CD4-positive, alpha-beta memory T cell (primary cell): ENCODE measurements at regions of chr7 and their contacts with region 1.

Region 1: DNA sequence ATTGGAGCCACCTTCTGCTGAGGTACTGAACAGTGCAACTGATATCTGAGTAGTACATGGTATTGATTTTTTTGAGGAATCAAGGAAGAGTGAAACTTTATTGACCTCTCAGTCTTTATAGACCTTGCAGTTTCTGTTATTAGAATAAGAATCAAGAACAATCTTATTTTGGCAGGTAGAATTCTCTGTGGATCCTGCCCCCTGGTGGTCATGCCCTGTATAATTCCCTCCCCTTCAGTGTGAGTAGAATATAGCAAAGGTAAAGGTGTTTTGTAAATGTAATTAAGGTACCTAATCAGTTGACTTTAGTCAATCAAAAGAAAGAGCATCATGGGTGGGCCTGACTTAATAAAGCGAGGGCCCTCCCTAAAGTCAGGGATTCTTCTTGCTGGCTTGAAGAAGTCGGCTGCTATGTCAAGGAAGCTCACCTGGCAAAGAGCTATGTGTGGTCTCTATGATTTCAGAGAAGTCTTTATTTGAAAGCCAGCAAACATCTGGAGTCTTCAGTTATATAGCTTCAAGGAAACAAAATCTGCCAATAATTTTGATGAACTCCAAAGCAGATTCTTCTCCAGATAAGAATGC is 142.8 kb downstream of the LSM5 start:
- DNase-seq: no peak
- H3K4me3 ChIP-seq: no peak overlapping the region
- H3K4me3 Mint-ChIP-seq: no peak overlapping the region
- H3K27ac ChIP-seq: no peak overlapping the region
- H3K27ac Mint-ChIP-seq: no peak overlapping the region
- H3K4me1 ChIP-seq: no peaks in the 10 kb centered on the region
- H3K4me1 Mint-ChIP-seq: no peaks in the 10 kb centered on the region
- H3K27me3 ChIP-seq: no peaks in the 10 kb centered on the region
- H3K27me3 Mint-ChIP-seq: no peaks in the 10 kb centered on the region

Region 2: DNA sequence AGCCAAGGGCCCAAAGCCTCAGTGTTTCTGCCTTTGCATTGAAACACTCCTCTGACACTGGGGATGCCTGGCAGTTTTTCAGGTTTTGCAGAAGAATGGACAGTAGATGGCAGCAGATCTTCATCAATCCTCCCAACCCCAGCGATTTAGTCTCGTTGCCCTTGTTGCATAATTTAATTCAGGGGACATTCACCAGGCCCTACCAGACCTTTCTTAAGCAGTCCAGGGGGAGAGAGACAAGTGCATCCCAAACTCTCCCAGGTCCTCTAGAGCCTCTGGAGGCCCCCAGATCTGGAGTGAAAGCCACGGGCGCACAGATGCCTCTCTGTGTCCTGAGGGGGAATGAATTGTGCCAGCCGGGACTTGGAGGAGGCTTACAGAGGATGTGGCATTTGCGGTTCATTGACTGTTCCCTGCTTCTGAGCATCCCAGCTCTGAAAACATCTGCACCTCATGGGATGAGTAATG is 1546.5 kb before region 1 on chr7:
- CTCF ChIA-PET with region 1: no interaction called
- POLR2A ChIA-PET with region 1: no interaction called
- intact Hi-C with region 1: loop called (anchors 5 kb)
- DNase-seq: peak in 4 of 5 donors; percentile 20 to 32 (median 29)
- H3K4me3 ChIP-seq: no peak overlapping the region
- H3K4me3 Mint-ChIP-seq: peak overlapping the region in 1 of 8 donors; percentile 13
- H3K27ac ChIP-seq: no peak overlapping the region
- H3K27ac Mint-ChIP-seq: no peak overlapping the region
- H3K4me1 ChIP-seq: peaks cover 5% of the 10 kb centered on the region
- H3K4me1 Mint-ChIP-seq: peaks cover 0 to 5% (median 1%) of the 10 kb centered on the region in 4 donors
- H3K27me3 ChIP-seq: no peaks in the 10 kb centered on the region
- H3K27me3 Mint-ChIP-seq: no peaks in the 10 kb centered on the region

Region 3: GRCh38 chr7:31899356-31899927 is 447.9 kb before region 1 on chr7:
- CTCF ChIA-PET with region 1: no interaction called
- POLR2A ChIA-PET with region 1: no interaction called
- intact Hi-C with region 1: no loop called
- DNase-seq: no peak
- H3K4me3 ChIP-seq: no peak overlapping the region
- H3K4me3 Mint-ChIP-seq: no peak overlapping the region
- H3K27ac ChIP-seq: no peak overlapping the region
- H3K27ac Mint-ChIP-seq: no peak overlapping the region
- H3K4me1 ChIP-seq: no peaks in the 10 kb centered on the region
- H3K4me1 Mint-ChIP-seq: no peaks in the 10 kb centered on the region
- H3K27me3 ChIP-seq: no peaks in the 10 kb centered on the region
- H3K27me3 Mint-ChIP-seq: no peaks in the 10 kb centered on the region

Region 4: GRCh38 chr7:32357535-32358277 is 10.4 kb after region 1 on chr7:
- CTCF ChIA-PET with region 1: interaction called, 12 read pairs
- POLR2A ChIA-PET with region 1: no interaction called
- intact Hi-C with region 1: no loop called
- DNase-seq: no peak
- H3K4me3 ChIP-seq: no peak overlapping the region
- H3K4me3 Mint-ChIP-seq: no peak overlapping the region
- H3K27ac ChIP-seq: no peak overlapping the region
- H3K27ac Mint-ChIP-seq: no peak overlapping the region
- H3K4me1 ChIP-seq: no peaks in the 10 kb centered on the region
- H3K4me1 Mint-ChIP-seq: no peaks in the 10 kb centered on the region
- H3K27me3 ChIP-seq: no peaks in the 10 kb centered on the region
- H3K27me3 Mint-ChIP-seq: peaks cover 0 to 7% of the 10 kb centered on the region in 2 donors

Region 5: DNA sequence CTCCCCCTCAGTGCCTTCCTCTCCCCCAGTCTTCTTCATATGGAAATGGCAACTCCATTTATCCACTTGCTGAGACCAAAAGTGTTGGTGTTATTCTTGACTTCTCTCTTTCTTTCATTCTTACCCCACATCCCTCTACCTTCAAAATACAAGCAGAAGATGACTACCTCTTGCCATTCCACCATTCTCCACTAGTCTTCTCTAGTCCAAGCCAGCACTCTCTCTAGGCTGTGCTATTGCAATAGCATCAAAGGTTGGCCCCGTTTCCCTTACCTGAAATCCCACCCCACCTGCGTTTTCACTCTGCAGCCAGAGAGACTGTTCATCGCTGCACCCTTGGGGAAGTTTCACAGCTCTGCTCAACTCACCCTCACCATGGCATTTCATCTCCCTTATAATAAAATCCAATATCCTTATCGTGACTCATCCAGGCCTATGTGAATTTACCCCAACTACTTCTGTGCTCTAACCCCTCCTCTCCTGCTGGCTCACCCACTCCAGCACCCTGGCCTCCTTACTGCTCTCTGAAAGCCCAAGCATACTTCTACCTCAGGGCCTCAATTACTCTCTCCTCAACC is 33.8 kb after region 1 on chr7:
- CTCF ChIA-PET with region 1: no interaction called
- POLR2A ChIA-PET with region 1: no interaction called
- intact Hi-C with region 1: no loop called
- DNase-seq: no peak
- H3K4me3 ChIP-seq: no peak overlapping the region
- H3K4me3 Mint-ChIP-seq: no peak overlapping the region
- H3K27ac ChIP-seq: no peak overlapping the region
- H3K27ac Mint-ChIP-seq: no peak overlapping the region
- H3K4me1 ChIP-seq: no peaks in the 10 kb centered on the region
- H3K4me1 Mint-ChIP-seq: no peaks in the 10 kb centered on the region
- H3K27me3 ChIP-seq: no peaks in the 10 kb centered on the region
- H3K27me3 Mint-ChIP-seq: peaks cover 15 to 20% of the 10 kb centered on the region in 2 donors